ENCODE measurements at regions of chr15 and their contacts with region 1.

Region 1: GRCh38 chr15:68154923-68155559 is 50.1 kb downstream of the CALML4 start:
- DNase-seq: peak; percentile 36
- ATAC-seq: no peak
- H3K4me3 Mint-ChIP-seq: no peak overlapping the region
- H3K27ac Mint-ChIP-seq: no peak overlapping the region
- H3K4me1 Mint-ChIP-seq: peaks cover 4% of the 10 kb centered on the region
- H3K27me3 Mint-ChIP-seq: no peaks in the 10 kb centered on the region
- CTCF ChIP-seq: peak; percentile 60

Region 2: GRCh38 chr15:67998599-67999122 is 156.4 kb before region 1 on chr15:
- CTCF ChIA-PET with region 1: no interaction called
- POLR2A ChIA-PET with region 1: no interaction called
- intact Hi-C with region 1: no loop called
- DNase-seq: no peak
- ATAC-seq: no peak
- H3K4me3 Mint-ChIP-seq: no peak overlapping the region
- H3K27ac Mint-ChIP-seq: no peak overlapping the region
- H3K4me1 Mint-ChIP-seq: no peaks in the 10 kb centered on the region
- H3K27me3 Mint-ChIP-seq: no peaks in the 10 kb centered on the region
- CTCF ChIP-seq: no peak

Region 3: DNA sequence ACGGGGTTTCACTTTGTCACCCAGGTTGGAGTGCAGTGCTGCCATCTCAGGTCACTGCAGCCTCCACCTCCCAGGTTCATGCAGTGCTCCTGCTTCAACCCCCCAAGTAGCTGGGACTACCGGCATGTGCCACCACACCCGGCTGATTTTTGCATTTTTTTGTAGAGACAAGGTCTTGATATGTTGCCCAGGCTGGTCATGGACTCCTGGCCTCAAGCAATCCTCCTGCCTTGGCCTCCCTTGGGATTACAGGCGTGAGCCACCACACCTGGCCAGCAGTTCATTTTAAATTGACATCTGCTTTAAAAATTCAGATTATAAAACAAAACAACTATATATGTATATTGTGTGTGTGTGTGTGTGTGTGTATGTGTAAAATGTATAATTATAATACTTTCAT is 11.8 kb after region 1 on chr15:
- CTCF ChIA-PET with region 1: interaction called, 25 read pairs
- POLR2A ChIA-PET with region 1: interaction called, 3 read pairs
- intact Hi-C with region 1: no loop called
- DNase-seq: no peak
- ATAC-seq: no peak
- H3K4me3 Mint-ChIP-seq: no peak overlapping the region
- H3K27ac Mint-ChIP-seq: no peak overlapping the region
- H3K4me1 Mint-ChIP-seq: no peaks in the 10 kb centered on the region
- H3K27me3 Mint-ChIP-seq: no peaks in the 10 kb centered on the region
- CTCF ChIP-seq: no peak